Activated CD8-positive, alpha-beta T cell treated with anti-CD3 and anti-CD28 coated beads, Interleukin-2, amount 10 ng/mL, durations not matched to agents 7 days and 5 days (primary cell): ENCODE measurements at regions of chr6 and their contacts with region 1.

Region 1: DNA sequence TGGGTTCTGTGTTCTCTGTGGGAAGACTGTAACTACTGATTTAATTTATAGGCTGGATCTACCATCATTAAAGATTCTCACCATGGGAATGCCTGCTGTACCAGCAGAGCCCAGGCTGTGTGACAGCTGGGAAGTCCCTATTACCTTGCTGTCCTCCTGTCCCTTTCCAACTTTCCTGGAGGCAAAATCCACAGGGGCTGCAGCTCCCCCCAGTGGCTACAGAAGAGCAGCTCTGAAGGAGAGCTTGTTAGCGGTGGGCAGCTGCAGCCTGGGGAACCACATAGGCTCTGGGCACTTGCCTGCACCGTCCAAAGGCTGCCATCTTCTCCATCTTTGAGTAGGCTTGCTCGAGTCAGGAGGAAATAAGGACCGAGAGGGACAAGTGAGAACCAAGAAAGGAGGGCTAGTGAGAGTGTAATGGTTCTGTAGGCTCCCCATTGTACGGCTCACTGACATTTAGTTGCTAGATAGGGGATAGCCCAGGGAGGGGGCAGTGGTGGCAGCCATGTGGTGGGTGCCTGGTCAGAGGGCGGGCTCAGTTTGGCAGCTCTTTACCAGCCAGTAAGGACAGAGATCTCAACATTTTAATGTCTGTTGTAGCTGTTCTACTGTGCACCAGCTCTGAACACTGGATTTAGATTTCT is 155.1 kb upstream of the MLIP start:
- DNase-seq: peak; percentile 35
- ATAC-seq: no peak
- H3K4me3 Mint-ChIP-seq: no peak overlapping the region
- H3K27ac Mint-ChIP-seq: no peak overlapping the region
- H3K4me1 Mint-ChIP-seq: no peaks in the 10 kb centered on the region
- H3K27me3 Mint-ChIP-seq: peaks cover 15% of the 10 kb centered on the region

Region 2: DNA sequence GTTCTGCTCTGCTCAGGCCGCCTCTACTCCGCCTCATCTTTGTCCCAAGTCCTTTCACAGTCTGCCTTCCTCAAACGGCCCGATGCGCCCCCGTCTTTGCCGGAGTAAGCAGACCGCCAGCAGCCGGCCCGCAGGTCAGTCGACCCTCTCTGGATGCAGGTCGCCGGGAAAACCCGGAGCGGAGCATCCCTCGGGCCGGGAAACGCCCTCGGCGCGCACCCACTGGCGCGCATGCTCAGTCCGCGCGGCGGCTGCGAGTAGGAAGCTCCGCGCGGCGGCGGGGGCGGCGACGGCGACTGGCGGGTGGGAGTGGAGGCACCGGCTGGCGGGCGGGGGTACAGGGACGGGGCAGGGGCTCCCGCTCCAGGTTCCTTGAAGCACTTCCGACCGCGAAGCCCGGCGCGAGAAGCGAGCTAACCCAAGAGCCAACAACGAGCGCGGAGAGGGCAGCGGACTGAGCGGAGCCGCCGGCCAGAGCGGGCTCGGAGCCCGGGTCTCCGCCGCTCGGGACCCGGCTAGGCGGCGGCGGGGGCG is 161.4 kb before region 1 on chr6 and contains the start of gene LRRC1:
- CTCF ChIA-PET with region 1: interaction called, 10 read pairs
- POLR2A ChIA-PET with region 1: no interaction called
- DNase-seq: peak; percentile 89
- ATAC-seq: peak; percentile 78
- H3K4me3 Mint-ChIP-seq: peak within 1 kb of the TSS; percentile 98
- H3K27ac Mint-ChIP-seq: peak within 1 kb of the TSS; percentile 86
- H3K4me1 Mint-ChIP-seq: peaks cover 27% of the 10 kb centered on the region
- H3K27me3 Mint-ChIP-seq: peaks cover 45% of the 10 kb centered on the region
- total RNA-seq, gene LRRC1: 3.6 to 4.2 TPM